ENCODE measurements at regions of chr17 and their contacts with region 1.

Region 1: GRCh38 chr17:75784473-75785015 is at the start of gene UNK:
- DNase-seq: peak; percentile 98
- H3K4me3 ChIP-seq: peak within 1 kb of the TSS; percentile 57 to 66
- H3K27ac ChIP-seq: peak within 1 kb of the TSS; percentile 98 to 99
- H3K4me1 ChIP-seq: peaks cover 15% of the 10 kb centered on the region
- H3K27me3 ChIP-seq: no peaks in the 10 kb centered on the region
- CTCF ChIP-seq: peak in 2 of 4 experiments; percentile 15 to 58
- POLR2A ChIP-seq: peak; percentile 65
- total RNA-seq, gene UNK: 68.9 to 72.5 TPM

Region 2: DNA sequence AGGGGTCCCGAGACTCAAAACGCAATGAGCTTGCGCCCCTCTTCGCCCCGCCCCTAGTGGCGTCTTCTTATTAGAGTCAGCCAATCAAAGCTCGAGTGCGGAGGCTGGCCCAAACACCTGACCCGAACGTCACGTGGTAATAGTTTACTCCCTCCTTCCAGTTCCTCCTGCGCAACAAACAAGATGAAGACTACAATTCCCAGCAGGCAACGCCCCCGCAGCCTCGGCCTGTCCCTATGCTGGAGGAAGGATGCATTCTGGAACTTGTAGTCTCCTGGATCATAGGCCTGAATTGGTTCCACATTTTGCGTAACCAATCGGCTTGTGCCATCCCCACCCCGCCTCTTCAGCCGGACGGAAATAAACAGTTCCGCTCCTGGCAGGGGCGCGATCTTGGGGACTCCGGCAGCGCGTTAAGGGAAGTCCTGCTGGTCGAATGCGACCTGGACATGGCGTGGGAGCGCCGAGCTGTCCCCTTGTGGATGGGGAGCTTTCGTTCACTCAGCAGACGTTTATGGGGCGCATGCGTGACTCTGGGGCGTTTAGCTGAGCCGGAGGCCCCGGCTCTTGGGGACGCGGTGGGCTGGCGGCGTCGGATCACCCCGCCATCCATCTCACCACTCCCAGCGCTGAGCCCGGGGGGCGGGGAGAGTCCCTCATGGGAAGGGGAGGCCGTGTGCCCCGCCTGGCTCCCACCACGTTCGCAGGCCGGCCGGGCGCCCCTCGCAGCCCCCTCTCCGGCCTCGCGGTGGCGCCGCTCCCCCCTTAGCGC is 71.0 kb after region 1 on chr17 and contains the start of gene WBP2:
- intact Hi-C with region 1: loop called (anchors 2 kb)
- DNase-seq: peak; percentile 100
- H3K4me3 ChIP-seq: peak within 1 kb of the TSS; percentile 72 to 89
- H3K27ac ChIP-seq: peak within 1 kb of the TSS; percentile 98
- H3K4me1 ChIP-seq: peaks cover 8% of the 10 kb centered on the region
- H3K27me3 ChIP-seq: no peaks in the 10 kb centered on the region
- CTCF ChIP-seq: peak; percentile 31 to 92 (median 50)
- POLR2A ChIP-seq: peak; percentile 99
- total RNA-seq, gene WBP2: 88.9 to 125 TPM

Region 3: DNA sequence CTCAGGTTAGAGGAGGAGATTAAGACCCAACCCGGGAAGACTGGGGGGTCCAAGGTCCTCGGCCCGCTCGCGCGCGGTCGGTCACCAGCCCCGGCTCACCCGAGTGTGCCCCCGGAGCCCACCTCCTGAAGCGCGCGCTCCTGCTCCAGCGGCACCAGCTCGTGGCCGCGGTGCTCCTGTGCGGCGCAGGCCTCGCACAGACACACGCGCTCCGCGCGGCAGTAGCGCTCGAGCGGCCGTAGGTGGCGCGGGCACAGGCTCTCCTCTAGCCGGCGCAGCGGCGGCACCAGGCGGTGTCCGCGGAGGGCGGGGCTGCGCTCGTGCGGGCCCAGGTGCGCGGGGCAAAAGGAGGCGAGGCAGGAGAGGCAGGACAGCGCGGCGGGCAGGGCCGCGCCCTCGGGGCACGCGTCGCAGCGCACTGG is 93.2 kb after region 1 on chr17:
- intact Hi-C with region 1: loop called (anchors 5 kb)
- DNase-seq: peak; percentile 58
- H3K4me3 ChIP-seq: peak overlapping the region; percentile 47 to 53
- H3K27ac ChIP-seq: peak overlapping the region; percentile 91
- H3K4me1 ChIP-seq: peaks cover 24% of the 10 kb centered on the region
- H3K27me3 ChIP-seq: no peaks in the 10 kb centered on the region
- CTCF ChIP-seq: peak in 2 of 4 experiments; percentile 61 to 69
- POLR2A ChIP-seq: no peak

Region 4: DNA sequence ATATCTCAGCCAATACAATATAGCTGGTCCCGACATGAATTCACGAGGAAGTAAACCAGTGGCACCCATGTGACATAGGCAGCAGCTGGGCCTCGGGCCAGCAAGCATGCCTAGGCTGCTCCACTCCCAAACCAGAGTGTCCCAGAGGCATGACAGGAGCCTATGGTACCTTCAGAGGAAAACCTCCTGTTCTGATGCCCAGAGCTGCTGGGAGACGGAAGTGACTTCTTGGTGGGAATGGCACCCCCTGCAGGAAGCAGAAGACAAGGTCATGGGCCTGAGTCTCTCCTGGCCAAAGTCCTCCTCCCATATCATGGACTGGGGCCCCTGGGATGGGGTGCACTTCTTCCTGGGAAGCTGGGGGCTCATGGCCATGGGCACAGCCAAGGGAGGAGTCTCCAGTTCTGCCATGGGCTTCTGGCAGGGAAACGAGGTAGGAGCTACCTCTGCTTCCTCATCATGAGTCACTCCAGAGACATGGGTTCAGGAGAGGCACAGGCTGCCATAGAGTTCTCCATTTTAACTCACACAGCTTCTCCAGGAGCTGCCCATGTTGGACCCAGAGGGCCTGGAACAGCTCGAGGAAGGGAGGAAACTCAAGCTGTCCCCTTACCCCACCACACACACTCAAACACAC is 142.9 kb after region 1 on chr17:
- intact Hi-C with region 1: no loop called
- DNase-seq: peak; percentile 77
- H3K4me3 ChIP-seq: no peak overlapping the region
- H3K27ac ChIP-seq: peak overlapping the region; percentile 11 to 44
- H3K4me1 ChIP-seq: no peaks in the 10 kb centered on the region
- H3K27me3 ChIP-seq: no peaks in the 10 kb centered on the region
- CTCF ChIP-seq: peak in 3 of 4 experiments; percentile 17 to 55 (median 47)
- POLR2A ChIP-seq: no peak